ENCODE measurements at regions of chr14 and their contacts with region 1.

Region 1: DNA sequence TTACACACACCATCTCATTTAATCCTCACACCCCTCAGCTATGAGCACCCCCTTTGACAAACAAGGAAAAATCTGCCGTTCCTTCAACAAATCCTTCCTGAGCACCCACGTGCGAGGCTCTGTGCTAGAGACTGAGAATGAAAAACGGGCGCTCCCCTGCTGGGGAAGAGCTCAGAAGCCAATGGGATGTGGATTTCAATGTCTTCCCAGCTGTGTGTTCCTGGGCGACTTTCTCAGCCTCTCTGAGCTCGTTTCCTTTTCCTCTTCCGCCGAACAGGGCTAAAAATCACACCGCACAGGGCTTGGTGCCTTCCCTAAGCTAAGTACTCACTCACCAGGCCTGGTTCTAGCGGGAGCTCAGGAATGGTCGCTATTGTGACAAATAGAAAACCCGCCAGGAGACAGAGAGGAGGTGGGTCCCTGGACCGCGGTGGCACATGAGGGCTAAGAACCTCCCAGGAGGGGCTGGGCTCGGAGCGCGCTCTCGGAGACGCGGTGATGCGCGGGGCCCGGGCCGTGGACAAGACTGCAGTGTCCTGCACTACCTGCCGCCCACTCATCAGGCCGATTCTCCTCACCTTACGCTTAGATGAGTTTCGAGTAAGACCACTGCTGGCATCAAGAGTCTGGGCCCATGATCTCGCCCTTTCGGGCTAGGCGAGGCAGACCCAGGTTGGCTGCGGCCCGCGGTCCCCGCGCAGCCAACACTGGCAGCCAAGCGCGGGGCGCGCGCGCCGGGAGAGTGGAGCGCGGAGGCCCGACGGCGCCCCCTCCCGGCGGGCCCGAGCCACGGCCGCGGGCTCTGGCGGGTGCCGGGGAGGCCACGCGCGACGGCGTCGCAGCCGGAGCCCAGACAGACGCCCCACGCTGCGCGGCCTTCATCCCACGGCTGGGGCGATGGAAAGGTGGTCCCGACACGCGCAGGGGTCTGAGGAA is 17.0 kb downstream of the ZDHHC22 start:
- DNase-seq: no peak
- H3K4me3 ChIP-seq: peak overlapping the region; percentile 58 to 64 (median 59)
- H3K27ac ChIP-seq: peak overlapping the region in 1 of 4 donors; percentile 52
- H3K4me1 ChIP-seq: peaks cover 33 to 56% (median 36%) of the 10 kb centered on the region in 4 donors
- H3K27me3 ChIP-seq: peaks cover 0 to 28% (median 3%) of the 10 kb centered on the region in 4 donors
- CTCF ChIP-seq: peak; percentile 70 to 88 (median 79)
- EP300 ChIP-seq: no peak
- POLR2A ChIP-seq: no peak

Region 2: DNA sequence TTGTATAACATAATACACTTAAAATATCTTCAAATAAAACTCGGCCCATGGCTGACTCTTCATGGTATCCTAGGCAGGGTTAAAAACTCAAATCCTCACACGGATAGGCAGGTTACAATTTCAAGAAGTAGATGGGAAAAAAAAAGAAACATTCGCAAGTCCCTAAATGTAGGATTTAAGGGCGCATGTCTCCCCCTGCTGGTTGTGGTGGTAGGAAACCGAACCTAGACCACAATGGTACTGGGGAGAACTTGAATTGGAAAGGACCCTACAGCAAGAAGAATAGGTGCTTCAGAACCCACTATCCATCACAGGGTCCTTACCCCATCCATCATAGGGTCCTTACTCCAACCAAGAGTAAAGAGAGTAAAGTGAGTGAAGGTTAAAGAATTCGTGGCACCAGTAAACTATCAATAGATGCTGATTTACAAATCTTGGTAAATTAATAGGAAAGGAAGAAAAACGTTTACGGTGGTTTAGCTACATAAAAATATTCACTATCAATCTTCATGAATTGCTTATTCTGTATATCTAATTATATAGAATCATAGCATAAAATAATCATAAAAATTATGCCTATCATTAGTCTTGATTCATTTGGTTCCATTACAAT is 29.8 kb before region 1 on chr14:
- intact Hi-C with region 1: loop called (anchors 5 kb)
- DNase-seq: no peak
- H3K4me3 ChIP-seq: no peak overlapping the region
- H3K27ac ChIP-seq: no peak overlapping the region
- H3K4me1 ChIP-seq: peaks cover 21 to 32% (median 24%) of the 10 kb centered on the region in 4 donors
- H3K27me3 ChIP-seq: no peaks in the 10 kb centered on the region
- CTCF ChIP-seq: peak; percentile 68 to 79 (median 79)
- EP300 ChIP-seq: no peak
- POLR2A ChIP-seq: no peak